ENCODE measurements at regions of chr1 and their contacts with region 1.

Region 1: DNA sequence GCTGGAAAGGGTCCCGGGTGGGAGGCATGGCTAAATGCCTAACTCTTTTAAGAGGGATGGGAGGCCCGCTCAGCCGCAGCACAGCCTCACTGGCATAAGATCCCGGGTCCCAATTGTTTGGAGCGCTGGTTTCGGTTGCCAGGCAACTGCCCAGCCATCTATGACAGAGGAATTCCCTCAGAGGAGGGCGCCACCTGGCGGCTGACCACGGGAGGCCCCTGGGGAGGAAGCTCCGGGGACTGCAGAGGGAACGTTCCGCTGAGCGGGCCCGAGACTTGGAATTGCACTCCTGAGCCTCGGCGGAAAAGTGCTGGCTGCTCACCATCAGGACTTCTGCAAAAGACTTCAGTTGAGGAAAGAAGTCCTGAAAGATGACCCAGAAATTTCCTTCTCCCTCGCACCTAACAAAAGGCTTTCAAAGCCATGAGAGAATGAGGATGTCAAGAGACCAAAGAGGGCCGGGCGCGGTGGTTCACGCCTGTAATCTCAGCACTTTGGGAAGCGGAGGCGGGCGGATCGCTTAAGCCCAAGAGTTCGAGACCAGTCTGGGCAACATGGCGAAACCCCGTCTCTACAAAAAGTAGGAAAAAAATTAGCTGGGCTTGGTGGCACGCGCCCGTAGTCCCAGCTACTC is 1.1 kb upstream of the ELAPOR1 start:
- DNase-seq: peak; percentile 87
- H3K4me3 ChIP-seq: no peak overlapping the region
- H3K27ac ChIP-seq: no peak overlapping the region
- H3K4me1 ChIP-seq: peaks cover 7% of the 10 kb centered on the region
- H3K27me3 ChIP-seq: peaks cover 39 to 60% of the 10 kb centered on the region in 2 experiments
- CTCF ChIP-seq: peak; percentile 98 to 99
- POLR2A ChIP-seq: no peak

Region 2: DNA sequence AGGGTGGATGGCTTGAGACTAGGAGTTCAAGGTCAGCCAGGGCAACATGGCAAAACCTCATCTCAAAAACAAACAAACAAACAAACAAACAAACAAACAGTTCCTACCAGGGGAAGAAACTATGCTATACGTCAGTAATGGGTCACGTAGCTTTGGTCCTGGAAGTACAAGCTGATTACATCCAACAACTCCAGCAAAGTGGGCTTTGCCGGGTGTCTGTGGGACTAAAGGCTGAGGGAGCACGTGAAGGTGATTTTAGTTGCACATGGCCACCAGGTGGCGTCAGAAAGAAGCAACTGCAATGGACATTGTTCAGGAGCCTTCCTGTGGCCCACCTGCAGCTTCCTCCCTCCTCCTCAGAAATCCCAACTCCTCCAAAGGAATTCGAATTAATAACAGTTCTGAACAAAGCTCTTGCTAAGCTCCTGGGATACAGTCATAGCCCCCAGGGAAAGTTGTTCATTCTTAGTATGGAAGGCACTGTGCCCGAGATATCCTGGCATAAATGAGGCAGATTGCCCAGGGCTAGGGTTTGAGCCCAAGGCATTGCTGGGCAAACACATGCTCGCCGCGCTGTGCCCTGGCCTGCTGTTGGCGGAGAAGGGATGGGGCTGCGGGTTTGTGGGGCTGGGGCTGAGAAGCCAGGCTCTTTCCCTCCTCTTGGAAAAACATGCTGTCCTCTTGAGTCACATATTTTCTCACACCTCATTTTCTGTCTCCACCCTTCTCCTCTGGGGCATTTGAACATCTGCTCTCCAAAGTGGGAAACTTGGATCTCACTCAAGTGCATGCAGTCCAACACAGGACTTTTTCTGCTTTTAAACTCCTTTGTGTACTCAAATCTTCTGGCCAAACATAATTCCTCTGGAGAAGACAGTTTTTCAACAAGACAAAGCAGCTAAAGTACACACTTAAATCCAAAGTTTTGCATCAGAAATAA is 284.5 kb before region 1 on chr1:
- CTCF ChIA-PET with region 1: interaction called, 11 read pairs
- POLR2A ChIA-PET with region 1: no interaction called
- dilution Hi-C with region 1: no loop called
- intact Hi-C with region 1: loop called (anchors 2 kb)
- DNase-seq: peak; percentile 70
- H3K4me3 ChIP-seq: no peak overlapping the region
- H3K27ac ChIP-seq: no peak overlapping the region
- H3K4me1 ChIP-seq: peaks cover 29% of the 10 kb centered on the region
- H3K27me3 ChIP-seq: peaks cover 0 to under 1% of the 10 kb centered on the region in 2 experiments
- CTCF ChIP-seq: peak; percentile 64 to 74
- POLR2A ChIP-seq: no peak

Region 3: GRCh38 chr1:108871050-108871724 is 241.6 kb before region 1 on chr1:
- CTCF ChIA-PET with region 1: no interaction called
- POLR2A ChIA-PET with region 1: no interaction called
- dilution Hi-C with region 1: no loop called
- intact Hi-C with region 1: no loop called
- DNase-seq: no peak
- H3K4me3 ChIP-seq: no peak overlapping the region
- H3K27ac ChIP-seq: no peak overlapping the region
- H3K4me1 ChIP-seq: no peaks in the 10 kb centered on the region
- H3K27me3 ChIP-seq: peaks cover 8 to 11% of the 10 kb centered on the region in 2 experiments
- CTCF ChIP-seq: no peak
- POLR2A ChIP-seq: no peak

Region 4: DNA sequence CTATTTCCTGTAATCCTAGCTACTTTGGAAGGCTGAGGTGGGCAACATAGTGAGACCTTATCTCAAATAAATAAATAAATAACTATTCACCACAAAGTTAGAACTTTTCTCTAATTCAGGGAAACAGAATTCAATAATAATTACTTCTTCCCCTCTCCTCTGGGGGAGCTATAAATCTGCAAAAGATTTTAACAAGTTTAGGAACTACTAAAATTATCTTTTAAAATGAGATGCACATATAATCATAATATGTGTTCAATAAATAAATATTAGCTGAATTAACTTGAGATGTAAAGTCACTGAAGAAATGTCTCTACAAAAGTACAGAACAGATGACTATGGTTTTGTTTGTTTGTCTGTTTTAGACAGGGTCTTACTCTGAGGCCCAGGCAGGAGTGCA is 84.9 kb before region 1 on chr1:
- CTCF ChIA-PET with region 1: interaction called, 16 read pairs
- POLR2A ChIA-PET with region 1: no interaction called
- dilution Hi-C with region 1: no loop called
- intact Hi-C with region 1: no loop called
- DNase-seq: no peak
- H3K4me3 ChIP-seq: no peak overlapping the region
- H3K27ac ChIP-seq: no peak overlapping the region
- H3K4me1 ChIP-seq: no peaks in the 10 kb centered on the region
- H3K27me3 ChIP-seq: no peaks in the 10 kb centered on the region
- CTCF ChIP-seq: no peak
- POLR2A ChIP-seq: no peak

Region 5: GRCh38 chr1:109075531-109076490 is 37.0 kb before region 1 on chr1 and contains the start of gene TAF13:
- CTCF ChIA-PET with region 1: interaction called, 6 read pairs
- POLR2A ChIA-PET with region 1: no interaction called
- dilution Hi-C with region 1: no loop called
- intact Hi-C with region 1: loop called (anchors 1 kb)
- DNase-seq: peak; percentile 96
- H3K4me3 ChIP-seq: peak within 1 kb of the TSS; percentile 53 to 90 (median 67)
- H3K27ac ChIP-seq: peak within 1 kb of the TSS; percentile 93
- H3K4me1 ChIP-seq: peaks cover 21% of the 10 kb centered on the region
- H3K27me3 ChIP-seq: no peaks in the 10 kb centered on the region
- CTCF ChIP-seq: peak in 1 of 2 donors; percentile 4
- POLR2A ChIP-seq: peak; percentile 97
- total RNA-seq, gene TAF13: 42.3 and 54.9 TPM in 2 replicates

Region 6: GRCh38 chr1:109099938-109100773 is 12.6 kb before region 1 on chr1:
- CTCF ChIA-PET with region 1: interaction called, 64 read pairs
- POLR2A ChIA-PET with region 1: interaction called, 10 read pairs
- dilution Hi-C with region 1: no loop called
- intact Hi-C with region 1: no loop called
- DNase-seq: peak; percentile 95
- H3K4me3 ChIP-seq: peak overlapping the region; percentile 62 to 97 (median 90)
- H3K27ac ChIP-seq: peak overlapping the region; percentile 76
- H3K4me1 ChIP-seq: no peaks in the 10 kb centered on the region
- H3K27me3 ChIP-seq: no peaks in the 10 kb centered on the region
- CTCF ChIP-seq: peak; percentile 90 to 94
- POLR2A ChIP-seq: peak; percentile 99

Region 7: GRCh38 chr1:109193653-109194590 is 81.2 kb after region 1 on chr1:
- CTCF ChIA-PET with region 1: interaction called, 14 read pairs
- POLR2A ChIA-PET with region 1: no interaction called
- dilution Hi-C with region 1: no loop called
- intact Hi-C with region 1: loop called (anchors 1 kb)
- DNase-seq: peak; percentile 19
- H3K4me3 ChIP-seq: no peak overlapping the region
- H3K27ac ChIP-seq: no peak overlapping the region
- H3K4me1 ChIP-seq: peaks cover 31% of the 10 kb centered on the region
- H3K27me3 ChIP-seq: no peaks in the 10 kb centered on the region
- CTCF ChIP-seq: peak; percentile 51 to 57
- POLR2A ChIP-seq: no peak

Region 8: GRCh38 chr1:109397538-109398342 is 285.0 kb after region 1 on chr1 and contains the start of gene SORT1:
- CTCF ChIA-PET with region 1: interaction called, 6 read pairs
- POLR2A ChIA-PET with region 1: no interaction called
- dilution Hi-C with region 1: no loop called
- intact Hi-C with region 1: loop called (anchors 2 kb)
- DNase-seq: peak; percentile 91
- H3K4me3 ChIP-seq: peak within 1 kb of the TSS; percentile 15 to 51 (median 44)
- H3K27ac ChIP-seq: no peak within 1 kb of the TSS
- H3K4me1 ChIP-seq: peaks cover 15% of the 10 kb centered on the region
- H3K27me3 ChIP-seq: peaks cover 13 to 19% of the 10 kb centered on the region in 2 experiments
- CTCF ChIP-seq: no peak
- POLR2A ChIP-seq: no peak
- total RNA-seq, gene SORT1: 16.8 and 17.8 TPM in 2 replicates